PC-3 (cell line): ENCODE measurements at regions of chr15 and their contacts with region 1.

Region 1: DNA sequence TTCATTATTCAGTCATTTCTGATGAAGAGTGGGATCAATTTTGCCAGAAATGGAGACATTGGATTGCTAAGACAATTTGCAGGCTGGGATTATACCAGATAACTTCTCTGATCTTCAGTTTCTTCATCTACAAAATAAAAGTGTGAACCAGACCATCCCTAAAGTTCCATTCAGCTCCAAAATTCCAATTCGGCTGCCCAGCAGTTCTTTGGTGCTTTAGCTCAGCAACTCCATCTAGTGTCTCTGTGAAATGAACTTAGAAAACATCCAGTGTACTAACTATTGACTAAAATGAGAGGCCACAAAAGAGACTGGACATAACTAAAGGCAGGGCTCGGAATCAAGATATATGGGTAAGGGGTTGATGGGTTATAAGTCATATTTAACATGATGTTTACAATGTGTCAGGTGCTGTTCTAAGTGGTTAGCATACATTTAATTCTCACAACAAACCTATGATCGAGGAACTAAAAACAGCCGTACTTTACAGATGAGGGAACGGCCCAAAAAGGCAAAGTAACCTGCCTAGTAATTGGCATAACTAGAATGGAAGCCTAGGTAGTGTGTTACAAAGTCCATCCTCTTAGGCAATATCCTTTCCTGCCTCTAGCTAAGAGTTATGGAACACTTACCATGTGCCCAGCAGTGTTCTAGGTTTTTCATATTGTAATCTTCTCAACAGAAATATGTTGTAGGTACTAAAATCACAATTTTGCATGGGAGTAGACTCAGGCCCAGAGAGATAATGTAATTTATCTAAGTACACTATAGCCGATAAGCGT is 17.0 kb downstream of the THAP10 start:
- DNase-seq: peak; percentile 64
- ATAC-seq: peak; percentile 71
- H3K4me3 ChIP-seq: no peak overlapping the region
- H3K27ac ChIP-seq: no peak overlapping the region
- H3K4me1 ChIP-seq: peaks cover 22% of the 10 kb centered on the region
- H3K27me3 ChIP-seq: no peaks in the 10 kb centered on the region
- CTCF ChIP-seq: peak; percentile 86

Region 2: GRCh38 chr15:70643783-70644125 is 231.4 kb before region 1 on chr15:
- CTCF ChIA-PET with region 1: no interaction called
- POLR2A ChIA-PET with region 1: no interaction called
- intact Hi-C with region 1: no loop called
- DNase-seq: peak; percentile 79
- ATAC-seq: peak; percentile 90
- H3K4me3 ChIP-seq: no peak overlapping the region
- H3K27ac ChIP-seq: no peak overlapping the region
- H3K4me1 ChIP-seq: peaks cover 16% of the 10 kb centered on the region
- H3K27me3 ChIP-seq: no peaks in the 10 kb centered on the region
- CTCF ChIP-seq: no peak

Region 3: GRCh38 chr15:70679919-70680231 is 195.3 kb before region 1 on chr15:
- CTCF ChIA-PET with region 1: interaction called, 5 read pairs
- POLR2A ChIA-PET with region 1: no interaction called
- intact Hi-C with region 1: loop called (anchors 5 kb)
- DNase-seq: no peak
- ATAC-seq: no peak
- H3K4me3 ChIP-seq: no peak overlapping the region
- H3K27ac ChIP-seq: no peak overlapping the region
- H3K4me1 ChIP-seq: no peaks in the 10 kb centered on the region
- H3K27me3 ChIP-seq: no peaks in the 10 kb centered on the region
- CTCF ChIP-seq: no peak

Region 4: GRCh38 chr15:70763120-70763878 is 111.9 kb before region 1 on chr15 and contains the start of gene UACA:
- CTCF ChIA-PET with region 1: interaction called, 3 read pairs
- POLR2A ChIA-PET with region 1: no interaction called
- intact Hi-C with region 1: loop called (anchors 10 kb)
- DNase-seq: peak; percentile 98
- ATAC-seq: peak; percentile 88
- H3K4me3 ChIP-seq: peak within 1 kb of the TSS; percentile 97
- H3K27ac ChIP-seq: peak within 1 kb of the TSS; percentile 80
- H3K4me1 ChIP-seq: peaks cover 16% of the 10 kb centered on the region
- H3K27me3 ChIP-seq: no peaks in the 10 kb centered on the region
- CTCF ChIP-seq: no peak
- total RNA-seq, gene UACA: 21.7 and 26.7 TPM in 2 replicates

Region 5: DNA sequence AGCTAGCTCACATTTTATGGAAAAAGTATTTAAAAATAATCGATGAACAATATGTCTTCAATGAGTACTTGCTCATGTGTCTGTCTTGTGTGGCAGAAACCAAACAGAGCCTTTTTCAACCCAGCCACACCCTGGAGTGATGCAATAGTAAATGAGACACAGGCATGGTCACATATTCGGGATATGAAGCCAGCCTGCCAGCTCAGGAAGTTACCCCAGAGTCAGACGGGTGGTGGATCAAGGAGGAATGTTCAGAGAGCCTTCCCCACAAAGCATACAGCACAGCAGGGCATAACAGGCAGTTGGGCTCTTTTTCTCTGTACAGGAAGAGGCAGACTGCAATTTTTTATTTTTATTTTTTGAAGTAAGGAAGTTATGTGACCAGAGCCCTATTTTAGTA is 48.6 kb before region 1 on chr15:
- CTCF ChIA-PET with region 1: interaction called, 21 read pairs
- POLR2A ChIA-PET with region 1: no interaction called
- intact Hi-C with region 1: loop called (anchors 1 kb)
- DNase-seq: peak; percentile 89
- ATAC-seq: peak; percentile 78
- H3K4me3 ChIP-seq: no peak overlapping the region
- H3K27ac ChIP-seq: peak overlapping the region; percentile 65
- H3K4me1 ChIP-seq: peaks cover 31% of the 10 kb centered on the region
- H3K27me3 ChIP-seq: no peaks in the 10 kb centered on the region
- CTCF ChIP-seq: no peak

Region 6: GRCh38 chr15:70856884-70857561 is 18.2 kb before region 1 on chr15:
- CTCF ChIA-PET with region 1: interaction called, 10 read pairs
- POLR2A ChIA-PET with region 1: interaction called, 10 read pairs
- intact Hi-C with region 1: no loop called
- DNase-seq: peak; percentile 94
- ATAC-seq: peak; percentile 37
- H3K4me3 ChIP-seq: peak overlapping the region; percentile 27; the same call in 1 of the 2 replicates
- H3K27ac ChIP-seq: peak overlapping the region; percentile 66
- H3K4me1 ChIP-seq: peaks cover 39% of the 10 kb centered on the region
- H3K27me3 ChIP-seq: no peaks in the 10 kb centered on the region
- CTCF ChIP-seq: no peak

Region 7: GRCh38 chr15:70910958-70911357 is 35.8 kb after region 1 on chr15:
- CTCF ChIA-PET with region 1: no interaction called
- POLR2A ChIA-PET with region 1: no interaction called
- intact Hi-C with region 1: no loop called
- DNase-seq: no peak
- ATAC-seq: no peak
- H3K4me3 ChIP-seq: no peak overlapping the region
- H3K27ac ChIP-seq: no peak overlapping the region
- H3K4me1 ChIP-seq: peaks cover 6% of the 10 kb centered on the region
- H3K27me3 ChIP-seq: no peaks in the 10 kb centered on the region
- CTCF ChIP-seq: no peak

Region 8: GRCh38 chr15:70995383-70995970 is 120.3 kb after region 1 on chr15:
- CTCF ChIA-PET with region 1: no interaction called
- POLR2A ChIA-PET with region 1: no interaction called
- intact Hi-C with region 1: no loop called
- DNase-seq: no peak
- ATAC-seq: no peak
- H3K4me3 ChIP-seq: no peak overlapping the region
- H3K27ac ChIP-seq: no peak overlapping the region
- H3K4me1 ChIP-seq: no peaks in the 10 kb centered on the region
- H3K27me3 ChIP-seq: no peaks in the 10 kb centered on the region
- CTCF ChIP-seq: no peak